Motor neuron (in vitro differentiated cells): ENCODE measurements at regions of chr5 and their contacts with region 1.

Region 1: DNA sequence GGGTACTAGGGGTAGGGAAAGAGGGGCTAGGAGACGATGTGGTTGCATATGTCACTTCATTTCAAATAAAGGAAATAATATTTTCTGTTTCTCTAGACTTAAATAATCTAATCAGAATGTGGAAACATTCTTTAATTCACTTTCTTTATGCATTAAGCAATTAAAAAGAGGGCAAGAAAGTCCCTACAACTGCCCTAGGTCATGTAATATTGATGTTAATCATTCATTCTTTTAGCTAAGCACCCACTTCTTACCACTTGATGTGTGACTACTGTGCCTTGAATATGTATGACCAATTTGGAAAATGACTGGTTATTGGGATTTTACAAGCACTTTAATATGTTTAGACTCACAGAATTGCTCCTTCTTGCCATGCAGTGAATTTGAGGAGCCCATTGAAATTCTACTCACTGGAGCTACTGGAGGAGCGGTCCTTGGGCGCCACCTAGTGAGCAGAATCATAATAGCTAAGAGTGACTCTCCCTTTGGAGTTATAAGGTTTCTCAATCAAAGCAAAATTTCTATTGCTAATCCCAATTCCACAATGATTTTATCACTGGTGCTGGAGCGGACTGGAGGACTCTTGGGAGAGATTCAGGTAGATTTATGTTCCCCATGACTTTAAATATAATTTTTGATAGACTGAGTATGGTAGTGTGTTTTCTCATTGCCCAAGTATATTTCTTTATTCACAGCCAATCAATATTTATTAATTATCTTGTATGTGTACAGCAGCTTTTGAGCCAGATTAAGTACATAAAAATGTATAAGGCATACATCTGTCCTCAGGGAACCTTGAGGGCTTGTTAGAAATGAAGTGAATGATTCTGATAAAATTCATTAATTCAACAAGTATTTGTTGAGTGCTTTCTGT is 225.1 kb downstream of the ADGRV1 start:
- ATAC-seq: peak; percentile 66 to 95 (median 83)
- H3K4me3 ChIP-seq: no peak overlapping the region
- H3K27ac ChIP-seq: no peak overlapping the region
- H3K4me1 ChIP-seq: no peaks in the 10 kb centered on the region

Region 2: GRCh38 chr5:90434116-90434714 is 349.5 kb before region 1 on chr5:
- in situ Hi-C with region 1: loop called in 3 of 9 experiments (anchors 25 kb)
- ATAC-seq: peak in 5 of 8 experiments; percentile 52 to 96 (median 86)
- H3K4me3 ChIP-seq: no peak overlapping the region
- H3K27ac ChIP-seq: no peak overlapping the region
- H3K4me1 ChIP-seq: no peaks in the 10 kb centered on the region

Region 3: DNA sequence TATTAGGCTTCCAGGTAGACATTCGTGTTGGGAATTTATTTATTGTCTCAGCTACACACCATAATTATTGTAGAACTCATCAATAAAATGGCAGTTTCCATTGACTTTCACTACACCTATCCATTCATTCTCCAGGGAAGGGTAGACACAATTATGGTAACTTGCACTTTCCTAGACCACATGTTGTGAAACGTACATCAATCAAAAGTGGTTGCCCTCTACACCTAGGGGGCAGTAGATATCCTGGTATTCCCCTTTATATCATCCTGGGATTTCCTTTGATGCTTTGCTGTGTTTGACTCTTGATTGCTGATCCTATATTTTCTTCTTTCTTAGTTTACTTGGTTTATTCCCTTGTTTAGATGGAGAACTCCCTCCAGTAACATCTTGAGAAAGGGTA is 177.2 kb before region 1 on chr5:
- in situ Hi-C with region 1: loop called in 2 of 9 experiments (anchors 10 to 25 kb)
- ATAC-seq: peak in 3 of 8 experiments; percentile 33 to 59 (median 47)
- H3K4me3 ChIP-seq: no peak overlapping the region
- H3K27ac ChIP-seq: no peak overlapping the region
- H3K4me1 ChIP-seq: peaks cover 0 to 4% of the 10 kb centered on the region in 2 donors

Region 4: DNA sequence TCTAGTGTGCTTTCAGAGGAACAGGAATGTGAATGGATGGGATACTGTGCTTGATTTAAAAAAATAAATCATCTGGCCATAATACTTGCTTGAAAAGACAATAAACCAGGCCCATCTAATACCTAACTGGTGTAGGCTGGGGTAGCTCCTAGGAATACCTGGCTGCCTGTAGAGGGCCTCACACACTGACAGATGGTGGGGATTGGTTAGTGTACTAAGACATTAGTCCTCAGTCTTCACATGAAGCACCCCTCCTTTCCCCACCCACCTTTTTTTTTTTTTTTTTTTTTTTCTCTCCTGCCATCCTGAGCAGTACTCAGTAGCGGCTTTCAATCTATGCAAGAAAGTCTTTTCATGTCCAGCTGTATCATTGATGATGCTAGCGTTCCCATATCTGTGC is 94.6 kb before region 1 on chr5:
- in situ Hi-C with region 1: loop called in 1 of 9 experiments (anchors 25 kb)
- ATAC-seq: peak in 5 of 8 experiments; percentile 57 to 83 (median 62)
- H3K4me3 ChIP-seq: no peak overlapping the region
- H3K27ac ChIP-seq: no peak overlapping the region
- H3K4me1 ChIP-seq: peaks cover 4 to 10% of the 10 kb centered on the region in 2 donors